GM13977 (cell line): ENCODE measurements at regions of chr3 and their contacts with region 1.

Region 1: DNA sequence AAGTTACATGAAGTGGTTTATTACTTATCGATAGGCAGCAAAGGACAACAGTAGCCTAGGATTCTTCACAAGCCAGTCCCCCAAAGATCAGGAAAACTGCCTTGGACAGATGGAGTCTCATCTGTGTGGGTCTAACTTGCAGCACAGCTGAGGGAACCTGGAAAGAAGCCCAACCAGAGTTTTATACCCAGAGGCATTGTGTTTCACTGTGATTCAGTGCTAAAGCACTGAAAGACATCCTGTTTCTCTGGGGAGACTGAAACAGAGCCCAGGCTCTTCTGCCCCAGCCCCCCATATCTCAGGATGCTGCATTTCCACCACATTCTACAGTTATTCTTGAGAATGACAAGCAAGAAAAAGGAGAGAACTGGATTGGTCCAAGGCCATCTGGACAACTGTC is 48.2 kb upstream of the PYDC2 start:
- DNase-seq: no peak
- CTCF ChIP-seq: no peak

Region 2: GRCh38 chr3:192212335-192212734 is 799.6 kb after region 1 on chr3:
- in situ Hi-C with region 1: loop called (anchors 25 kb)
- DNase-seq: no peak
- CTCF ChIP-seq: peak; percentile 46

Region 3: GRCh38 chr3:192444096-192444790 is 1031.5 kb after region 1 on chr3:
- in situ Hi-C with region 1: loop called (anchors 25 kb)
- DNase-seq: peak; percentile 53
- CTCF ChIP-seq: peak; percentile 98